Naive thymus-derived CD4-positive, alpha-beta T cell (primary cell): ENCODE measurements at regions of chr13 and their contacts with region 1.

Region 1: DNA sequence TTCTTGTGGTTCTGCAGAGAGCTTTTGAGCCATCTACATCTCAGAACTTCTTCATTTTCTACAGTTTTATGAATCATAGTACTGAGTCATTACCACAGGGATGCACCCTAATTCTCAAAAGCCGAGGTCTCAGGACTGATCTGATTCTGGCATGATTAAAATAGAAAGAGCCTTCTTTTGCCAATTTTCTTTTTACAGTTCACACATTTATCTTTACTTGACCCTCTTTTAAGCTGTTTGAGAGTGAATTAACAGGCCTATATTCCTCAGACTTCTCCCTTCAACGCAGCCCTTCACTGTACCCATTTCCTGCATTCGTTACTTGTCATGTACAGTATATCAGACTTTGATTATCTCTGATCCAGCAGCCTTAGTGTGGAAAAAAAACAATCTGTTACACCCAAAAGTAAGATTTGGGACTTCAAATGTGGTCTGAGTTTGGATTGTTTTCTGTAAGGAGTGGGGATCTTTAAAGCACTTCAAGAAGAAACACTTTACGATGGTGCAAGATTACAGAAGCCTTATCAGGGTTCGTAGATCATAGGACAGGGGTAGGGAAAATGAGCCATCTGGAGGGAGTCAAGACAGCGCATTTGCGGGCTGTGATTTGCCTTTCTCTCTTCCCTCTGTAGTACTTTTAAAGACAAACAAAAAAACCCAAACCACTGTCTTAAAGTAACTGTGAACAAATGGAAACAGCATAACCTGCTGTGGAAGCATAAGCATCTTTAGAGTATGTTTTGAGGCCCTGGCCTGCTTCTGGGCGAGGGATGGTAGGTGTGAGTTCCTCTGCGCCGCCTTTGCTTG is 15.3 kb upstream of the GPR183 start:
- DNase-seq: peak in 6 of 9 donors; percentile 35 to 64 (median 48)
- ATAC-seq: peak; percentile 81
- H3K4me3 ChIP-seq: peak overlapping the region; percentile 2
- H3K4me3 Mint-ChIP-seq: peak overlapping the region; percentile 51 to 84 (median 67)
- H3K27ac ChIP-seq: peak overlapping the region; percentile 77
- H3K27ac Mint-ChIP-seq: peak overlapping the region; percentile 88 to 99 (median 95)
- H3K4me1 ChIP-seq: peaks cover 65 to 66% of the 10 kb centered on the region in 2 donors
- H3K4me1 Mint-ChIP-seq: peaks cover 38 to 95% (median 75%) of the 10 kb centered on the region in 7 donors
- H3K27me3 ChIP-seq: no peaks in the 10 kb centered on the region
- H3K27me3 Mint-ChIP-seq: no peaks in the 10 kb centered on the region

Region 2: GRCh38 chr13:99275093-99275469 is 47.4 kb before region 1 on chr13:
- CTCF ChIA-PET with region 1: interaction called, 3 read pairs
- POLR2A ChIA-PET with region 1: interaction called, 10 read pairs
- intact Hi-C with region 1: no loop called
- DNase-seq: peak in 4 of 9 donors; percentile 33 to 41 (median 38)
- ATAC-seq: peak; percentile 52
- H3K4me3 ChIP-seq: peak overlapping the region; percentile 5
- H3K4me3 Mint-ChIP-seq: peak overlapping the region; percentile 31 to 77 (median 67)
- H3K27ac ChIP-seq: peak overlapping the region; percentile 49
- H3K27ac Mint-ChIP-seq: peak overlapping the region; percentile 83 to 95 (median 92)
- H3K4me1 ChIP-seq: peaks cover 61 to 89% of the 10 kb centered on the region in 2 donors
- H3K4me1 Mint-ChIP-seq: peaks cover 64 to 100% (median 98%) of the 10 kb centered on the region in 7 donors
- H3K27me3 ChIP-seq: no peaks in the 10 kb centered on the region
- H3K27me3 Mint-ChIP-seq: no peaks in the 10 kb centered on the region

Region 3: DNA sequence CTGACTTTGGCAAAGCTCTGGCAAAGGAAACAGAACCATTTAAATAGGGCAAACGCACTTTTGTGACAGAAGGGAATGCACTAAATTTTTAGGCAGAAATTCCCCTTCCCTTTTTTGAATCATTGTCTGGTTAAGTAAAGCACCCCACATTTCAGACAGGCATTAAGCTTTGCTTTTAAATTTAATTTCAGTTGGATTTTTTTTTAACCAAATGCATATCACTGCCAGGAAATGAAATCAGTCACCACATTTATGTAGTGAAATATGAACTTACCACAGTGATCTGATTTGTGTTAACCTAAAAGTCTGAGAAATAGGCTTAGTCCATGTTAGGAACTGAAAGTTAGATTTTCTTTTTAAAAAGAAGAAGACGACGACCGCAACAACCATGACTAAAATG is 26.1 kb before region 1 on chr13:
- CTCF ChIA-PET with region 1: interaction called, 3 read pairs
- POLR2A ChIA-PET with region 1: interaction called, 5 read pairs
- intact Hi-C with region 1: loop called in 1 of 2 experiments (anchors 1 kb)
- DNase-seq: peak in 6 of 9 donors; percentile 49 to 69 (median 57)
- ATAC-seq: peak; percentile 59
- H3K4me3 ChIP-seq: peak overlapping the region; percentile 28
- H3K4me3 Mint-ChIP-seq: peak overlapping the region; percentile 73 to 91 (median 82)
- H3K27ac ChIP-seq: peak overlapping the region; percentile 73
- H3K27ac Mint-ChIP-seq: peak overlapping the region; percentile 89 to 98 (median 93)
- H3K4me1 ChIP-seq: peaks cover 78 to 81% of the 10 kb centered on the region in 2 donors
- H3K4me1 Mint-ChIP-seq: peaks cover 60 to 94% (median 88%) of the 10 kb centered on the region in 7 donors
- H3K27me3 ChIP-seq: no peaks in the 10 kb centered on the region
- H3K27me3 Mint-ChIP-seq: no peaks in the 10 kb centered on the region

Region 4: GRCh38 chr13:99347911-99348451 is 25.5 kb after region 1 on chr13:
- CTCF ChIA-PET with region 1: interaction called, 7 read pairs
- POLR2A ChIA-PET with region 1: interaction called, 12 read pairs
- intact Hi-C with region 1: loop called in 1 of 2 experiments (anchors 1 kb)
- DNase-seq: no peak
- ATAC-seq: no peak
- H3K4me3 ChIP-seq: no peak overlapping the region
- H3K4me3 Mint-ChIP-seq: peak overlapping the region in 2 of 10 donors; percentile 17 to 48
- H3K27ac ChIP-seq: peak overlapping the region; percentile 41
- H3K27ac Mint-ChIP-seq: peak overlapping the region; percentile 30 to 99 (median 96)
- H3K4me1 ChIP-seq: peaks cover 30 to 36% of the 10 kb centered on the region in 2 donors
- H3K4me1 Mint-ChIP-seq: peaks cover 42 to 98% (median 89%) of the 10 kb centered on the region in 7 donors
- H3K27me3 ChIP-seq: no peaks in the 10 kb centered on the region
- H3K27me3 Mint-ChIP-seq: no peaks in the 10 kb centered on the region

Region 5: GRCh38 chr13:99380921-99381645 is 58.6 kb after region 1 on chr13:
- CTCF ChIA-PET with region 1: interaction called, 3 read pairs
- POLR2A ChIA-PET with region 1: interaction called, 7 read pairs
- intact Hi-C with region 1: loop called in 1 of 2 experiments (anchors 2 kb)
- DNase-seq: peak in 8 of 9 donors; percentile 55 to 73 (median 62)
- ATAC-seq: peak; percentile 51
- H3K4me3 ChIP-seq: peak overlapping the region; percentile 1
- H3K4me3 Mint-ChIP-seq: peak overlapping the region; percentile 63 to 85 (median 76)
- H3K27ac ChIP-seq: peak overlapping the region; percentile 85
- H3K27ac Mint-ChIP-seq: peak overlapping the region; percentile 94 to 99 (median 98)
- H3K4me1 ChIP-seq: peaks cover 77 to 88% of the 10 kb centered on the region in 2 donors
- H3K4me1 Mint-ChIP-seq: peaks cover 48 to 100% (median 98%) of the 10 kb centered on the region in 7 donors
- H3K27me3 ChIP-seq: no peaks in the 10 kb centered on the region
- H3K27me3 Mint-ChIP-seq: no peaks in the 10 kb centered on the region